H1 (cell line): ENCODE measurements at regions of chr9 and their contacts with region 1.

Region 1: DNA sequence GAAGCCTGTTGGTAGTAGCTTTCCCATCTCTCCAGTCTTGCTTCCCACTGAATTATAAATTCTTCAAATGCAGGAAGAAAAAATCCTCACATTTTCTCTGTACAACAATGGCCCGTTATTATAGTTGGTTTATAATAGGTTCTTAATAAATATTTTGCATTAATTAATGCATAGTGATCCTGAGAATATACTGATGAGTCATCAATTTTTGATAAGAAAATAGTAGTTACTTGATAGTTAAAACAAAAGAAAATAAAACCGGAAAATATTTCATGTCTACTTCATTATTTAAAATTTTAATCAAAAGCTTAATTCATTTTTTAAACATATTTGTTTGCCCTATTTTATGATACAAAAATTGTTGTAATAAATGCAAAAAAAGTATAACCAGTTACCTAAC is 762.6 kb downstream of the BRINP1 start:
- DNase-seq: no peak
- H3K4me3 ChIP-seq: no peak overlapping the region
- H3K27ac ChIP-seq: no peak overlapping the region
- H3K4me1 ChIP-seq: no peaks in the 10 kb centered on the region
- H3K27me3 ChIP-seq: no peaks in the 10 kb centered on the region
- CTCF ChIP-seq: no peak
- EP300 ChIP-seq: no peak
- POLR2A ChIP-seq: no peak
- RAD21 ChIP-seq: no peak

Region 2: DNA sequence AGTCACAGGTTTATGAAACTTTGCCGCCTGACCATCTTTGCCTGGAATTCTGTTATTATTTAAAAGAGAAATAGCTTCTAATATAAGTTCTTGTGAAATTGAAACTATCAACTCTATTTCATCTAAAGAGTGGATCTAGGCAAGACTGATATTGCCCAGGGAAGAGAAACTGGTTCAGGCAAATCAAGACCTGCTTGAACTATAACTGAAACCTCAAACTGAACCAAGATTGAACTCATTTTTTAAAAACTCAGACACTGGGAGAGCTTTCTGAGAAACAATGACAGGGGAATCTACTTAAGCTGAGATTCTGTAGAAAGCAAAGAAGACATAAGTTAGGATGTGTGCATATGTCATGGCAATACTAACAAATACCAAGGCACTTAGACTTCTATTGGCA is 53.2 kb before region 1 on chr9:
- CTCF ChIA-PET with region 1: no interaction called
- POLR2A ChIA-PET with region 1: no interaction called
- DNase-seq: no peak
- H3K4me3 ChIP-seq: no peak overlapping the region
- H3K27ac ChIP-seq: no peak overlapping the region
- H3K4me1 ChIP-seq: no peaks in the 10 kb centered on the region
- H3K27me3 ChIP-seq: no peaks in the 10 kb centered on the region
- CTCF ChIP-seq: no peak
- EP300 ChIP-seq: no peak
- POLR2A ChIP-seq: no peak
- RAD21 ChIP-seq: no peak

Region 3: GRCh38 chr9:118563677-118564076 is 43.0 kb before region 1 on chr9:
- CTCF ChIA-PET with region 1: no interaction called
- POLR2A ChIA-PET with region 1: no interaction called
- DNase-seq: no peak
- H3K4me3 ChIP-seq: no peak overlapping the region
- H3K27ac ChIP-seq: no peak overlapping the region
- H3K4me1 ChIP-seq: no peaks in the 10 kb centered on the region
- H3K27me3 ChIP-seq: no peaks in the 10 kb centered on the region
- CTCF ChIP-seq: no peak
- EP300 ChIP-seq: no peak
- POLR2A ChIP-seq: no peak
- RAD21 ChIP-seq: no peak

Region 4: GRCh38 chr9:118595719-118596305 is 10.9 kb before region 1 on chr9:
- CTCF ChIA-PET with region 1: interaction called, 16 read pairs
- POLR2A ChIA-PET with region 1: interaction called, 3 read pairs
- DNase-seq: peak; percentile 25 to 51
- H3K4me3 ChIP-seq: no peak overlapping the region
- H3K27ac ChIP-seq: no peak overlapping the region
- H3K4me1 ChIP-seq: no peaks in the 10 kb centered on the region
- H3K27me3 ChIP-seq: no peaks in the 10 kb centered on the region
- CTCF ChIP-seq: peak; percentile 52 to 82 (median 77)
- EP300 ChIP-seq: no peak
- POLR2A ChIP-seq: no peak
- RAD21 ChIP-seq: peak; percentile 94 to 97